ENCODE measurements at regions of chr12 and their contacts with region 1.

Region 1: GRCh38 chr12:79451978-79452377 is 238.8 kb downstream of the PAWR start:
- DNase-seq: peak; percentile 49 to 79
- H3K4me3 ChIP-seq: peak overlapping the region; percentile 27 to 29
- H3K27ac ChIP-seq: peak overlapping the region; percentile 32 to 62
- H3K4me1 ChIP-seq: peaks cover 3 to 26% of the 10 kb centered on the region in 2 donors
- H3K27me3 ChIP-seq: no peaks in the 10 kb centered on the region
- CTCF ChIP-seq: no peak

Region 2: DNA sequence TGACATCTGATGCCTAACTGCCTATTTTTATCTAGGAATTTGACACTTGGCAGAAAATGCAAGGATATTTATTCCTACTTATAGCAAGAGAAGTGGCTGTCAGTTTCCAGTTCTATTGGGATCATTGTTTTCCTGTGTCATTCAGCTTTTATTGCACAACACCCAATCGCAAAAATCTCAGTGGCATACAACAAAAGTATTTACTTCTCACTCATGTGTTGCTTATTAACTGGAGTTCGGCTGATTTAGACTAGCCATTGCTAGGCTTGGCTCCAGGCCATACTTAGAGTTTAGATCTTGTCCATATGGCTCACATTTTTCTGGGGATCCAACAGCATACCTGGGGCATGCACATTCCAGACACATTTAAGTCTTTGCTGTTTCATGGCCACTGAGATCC is 806.0 kb before region 1 on chr12:
- intact Hi-C with region 1: no loop called
- DNase-seq: no peak
- H3K4me3 ChIP-seq: no peak overlapping the region
- H3K27ac ChIP-seq: no peak overlapping the region
- H3K4me1 ChIP-seq: no peaks in the 10 kb centered on the region
- H3K27me3 ChIP-seq: no peaks in the 10 kb centered on the region
- CTCF ChIP-seq: no peak

Region 3: DNA sequence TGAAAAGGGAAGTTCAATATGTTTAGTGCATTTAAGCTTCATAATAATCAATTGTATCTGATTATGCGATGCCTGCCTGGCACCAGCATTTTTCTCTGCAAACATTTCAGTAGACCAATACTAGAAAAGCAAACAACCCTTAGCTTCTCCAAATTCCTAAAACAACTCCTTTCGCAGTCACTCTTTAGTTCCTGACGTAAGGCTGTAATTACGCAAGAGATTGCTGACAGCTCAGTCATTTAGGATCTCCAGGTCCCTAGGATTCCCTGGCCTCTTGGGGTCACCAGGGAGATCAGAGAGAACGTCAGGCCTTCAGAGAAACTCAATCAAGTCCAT is 151.8 kb before region 1 on chr12:
- intact Hi-C with region 1: no loop called
- DNase-seq: no peak
- H3K4me3 ChIP-seq: no peak overlapping the region
- H3K27ac ChIP-seq: no peak overlapping the region
- H3K4me1 ChIP-seq: no peaks in the 10 kb centered on the region
- H3K27me3 ChIP-seq: no peaks in the 10 kb centered on the region
- CTCF ChIP-seq: no peak

Region 4: GRCh38 chr12:79373896-79374499 is 78.0 kb before region 1 on chr12:
- intact Hi-C with region 1: no loop called
- DNase-seq: no peak
- H3K4me3 ChIP-seq: no peak overlapping the region
- H3K27ac ChIP-seq: no peak overlapping the region
- H3K4me1 ChIP-seq: no peaks in the 10 kb centered on the region
- H3K27me3 ChIP-seq: no peaks in the 10 kb centered on the region
- CTCF ChIP-seq: peak in 2 of 3 experiments; percentile 29 to 42

Region 5: GRCh38 chr12:79414261-79414722 is 37.7 kb before region 1 on chr12:
- intact Hi-C with region 1: loop called (anchors 5 kb)
- DNase-seq: no peak
- H3K4me3 ChIP-seq: no peak overlapping the region
- H3K27ac ChIP-seq: no peak overlapping the region
- H3K4me1 ChIP-seq: peaks cover 3 to 11% of the 10 kb centered on the region in 2 donors
- H3K27me3 ChIP-seq: no peaks in the 10 kb centered on the region
- CTCF ChIP-seq: no peak

Region 6: DNA sequence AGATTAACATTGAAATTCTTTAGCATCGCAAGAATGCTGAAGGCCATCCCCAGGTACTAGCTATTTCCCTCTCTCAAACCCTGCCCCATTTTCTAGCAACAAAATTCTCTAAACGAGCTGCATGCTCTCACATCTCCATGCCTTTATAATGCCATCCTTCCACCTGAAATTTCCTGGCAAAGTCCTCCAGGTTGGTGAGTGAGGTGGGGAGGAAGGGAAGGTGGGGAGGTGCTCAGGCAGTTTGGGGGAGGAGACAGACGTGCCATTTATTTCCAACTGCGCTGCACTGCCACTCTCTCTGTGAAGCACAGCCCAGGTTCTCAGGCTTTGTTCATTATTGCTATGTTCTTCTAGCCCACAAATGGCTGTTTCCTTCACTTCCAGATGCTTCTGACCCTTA is 30.3 kb after region 1 on chr12:
- intact Hi-C with region 1: no loop called
- DNase-seq: no peak
- H3K4me3 ChIP-seq: no peak overlapping the region
- H3K27ac ChIP-seq: no peak overlapping the region
- H3K4me1 ChIP-seq: no peaks in the 10 kb centered on the region
- H3K27me3 ChIP-seq: no peaks in the 10 kb centered on the region
- CTCF ChIP-seq: no peak